Cardiac septum (tissue), 1 donor: ENCODE measurements at regions of chr1 and their contacts with region 1.

Region 1: DNA sequence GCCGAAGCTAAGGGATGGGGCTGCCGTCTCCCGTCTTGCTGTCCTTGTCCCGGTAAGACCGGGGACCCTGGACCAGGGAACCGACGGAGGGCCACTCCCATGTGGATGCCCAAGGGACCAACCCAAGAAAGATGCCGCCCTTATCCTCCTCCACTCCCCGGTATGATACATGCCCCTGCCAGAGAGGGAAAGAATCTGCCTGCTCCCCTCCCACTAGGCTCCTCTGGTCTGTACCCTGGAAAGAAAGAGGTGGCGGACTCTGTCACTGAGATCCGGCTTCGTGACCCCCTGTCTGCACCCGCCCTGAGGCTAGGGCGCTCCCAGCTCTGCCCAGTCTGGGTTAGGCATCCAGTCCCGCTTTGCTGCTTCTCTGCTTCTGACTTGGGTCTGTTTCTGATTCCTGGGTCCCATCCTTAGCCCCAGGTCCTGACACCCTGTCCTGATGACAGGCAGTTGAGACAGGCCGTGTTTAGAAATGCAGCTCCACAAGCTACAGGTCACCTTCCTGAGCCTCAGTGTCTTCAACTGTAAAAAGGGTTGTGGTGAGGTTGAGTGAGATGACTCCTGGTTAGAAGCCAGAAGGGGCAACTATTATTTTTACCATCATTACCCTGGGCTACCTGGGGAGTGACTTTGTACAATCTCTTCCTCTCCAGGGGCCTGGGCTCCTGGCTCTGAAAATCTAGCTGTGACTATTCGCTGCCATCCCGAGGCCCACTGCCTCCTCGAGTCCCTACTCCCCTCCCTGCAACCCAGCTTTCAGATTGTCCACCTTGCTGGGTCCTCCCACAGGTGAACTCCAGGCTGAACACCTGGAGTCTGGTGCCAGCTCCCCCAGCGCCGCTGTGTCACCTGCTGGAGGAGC is 3.7 kb downstream of the MATN1 start:
- DNase-seq: no peak

Region 2: DNA sequence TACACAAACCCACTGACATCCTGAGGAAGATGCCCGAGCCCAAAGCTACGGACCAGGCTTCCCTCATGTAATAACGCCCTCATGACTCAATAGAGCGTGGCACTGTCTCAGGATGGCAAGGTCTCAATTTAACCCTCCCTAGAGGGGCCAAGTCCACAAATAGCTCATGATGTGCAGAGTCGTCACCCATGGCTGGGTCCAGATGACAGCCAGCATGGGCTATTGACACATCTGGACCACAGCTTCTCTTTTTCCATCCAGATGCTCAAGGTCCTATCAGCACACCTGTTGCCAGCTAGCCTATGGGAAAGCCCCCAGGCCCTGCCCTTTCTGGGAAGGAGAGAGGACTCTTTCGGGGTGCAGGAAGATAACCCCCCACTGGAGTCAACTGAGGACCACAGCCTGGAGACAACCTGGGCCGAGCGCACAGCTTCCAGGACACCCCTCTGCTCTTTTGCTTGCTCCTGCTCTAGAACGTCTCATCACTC is 35.1 kb after region 1 on chr1:
- intact Hi-C with region 1: no loop called
- DNase-seq: no peak

Region 3: GRCh38 chr1:31422505-31423319 is 703.1 kb after region 1 on chr1:
- intact Hi-C with region 1: loop called (anchors 10 kb)
- DNase-seq: no peak